Mammary epithelial cell (primary cell): ENCODE measurements at regions of chr3 and their contacts with region 1.

Region 1: GRCh38 chr3:27712136-27713077 is 9.7 kb downstream of the EOMES start:
- DNase-seq: peak; percentile 60
- H3K4me3 ChIP-seq: peak overlapping the region; percentile 48 to 56 (median 50)
- H3K27ac ChIP-seq: no peak overlapping the region
- H3K4me1 ChIP-seq: peaks cover 19% of the 10 kb centered on the region
- H3K27me3 ChIP-seq: no peaks in the 10 kb centered on the region
- CTCF ChIP-seq: peak; percentile 63 to 90

Region 2: DNA sequence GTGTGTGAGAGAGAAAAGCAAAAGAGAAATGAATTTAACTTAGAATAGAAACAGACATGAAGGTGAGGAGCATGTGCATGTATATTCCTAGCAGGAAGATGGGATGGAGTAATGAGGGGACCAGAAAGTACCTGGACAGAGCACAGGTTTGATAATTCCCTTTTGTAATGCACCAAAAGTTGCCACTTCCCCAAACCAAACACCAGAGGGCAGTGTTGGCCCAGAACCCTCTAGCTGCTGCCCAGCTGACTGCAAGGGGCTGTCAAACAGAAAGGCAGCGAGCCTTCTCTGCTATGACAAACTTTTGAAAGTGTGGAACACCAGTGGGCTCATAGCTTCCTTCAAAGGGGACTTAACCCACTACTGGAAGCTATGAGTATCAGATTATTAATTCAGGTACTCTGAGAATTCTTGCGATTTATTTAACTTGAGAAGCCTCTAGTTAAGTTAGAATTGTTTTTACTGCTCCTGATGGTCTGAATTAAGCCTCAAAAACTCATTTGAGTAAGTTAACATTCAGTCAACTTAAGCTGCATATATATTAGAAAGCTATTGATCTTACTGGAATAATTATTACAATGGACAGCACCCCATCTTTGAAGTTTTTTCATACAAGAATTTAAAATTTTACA is 578.1 kb before region 1 on chr3:
- CTCF ChIA-PET with region 1: no interaction called
- dilution Hi-C with region 1: no loop called
- in situ Hi-C with region 1: no loop called
- intact Hi-C with region 1: loop called (anchors 1 kb)
- DNase-seq: peak; percentile 46
- H3K4me3 ChIP-seq: no peak overlapping the region
- H3K27ac ChIP-seq: no peak overlapping the region
- H3K4me1 ChIP-seq: no peaks in the 10 kb centered on the region
- H3K27me3 ChIP-seq: no peaks in the 10 kb centered on the region
- CTCF ChIP-seq: peak; percentile 86 to 95

Region 3: GRCh38 chr3:27888562-27888961 is 176.2 kb after region 1 on chr3:
- CTCF ChIA-PET with region 1: interaction called, 4 read pairs
- dilution Hi-C with region 1: no loop called
- in situ Hi-C with region 1: no loop called
- intact Hi-C with region 1: loop called (anchors 1 kb)
- DNase-seq: peak; percentile 2
- H3K4me3 ChIP-seq: no peak overlapping the region
- H3K27ac ChIP-seq: no peak overlapping the region
- H3K4me1 ChIP-seq: no peaks in the 10 kb centered on the region
- H3K27me3 ChIP-seq: peaks cover 5% of the 10 kb centered on the region
- CTCF ChIP-seq: peak in 1 of 2 donors; percentile 31

Region 4: GRCh38 chr3:27943106-27943505 is 230.7 kb after region 1 on chr3:
- CTCF ChIA-PET with region 1: no interaction called
- dilution Hi-C with region 1: no loop called
- in situ Hi-C with region 1: no loop called
- intact Hi-C with region 1: no loop called
- DNase-seq: peak; percentile 20
- H3K4me3 ChIP-seq: no peak overlapping the region
- H3K27ac ChIP-seq: no peak overlapping the region
- H3K4me1 ChIP-seq: no peaks in the 10 kb centered on the region
- H3K27me3 ChIP-seq: no peaks in the 10 kb centered on the region
- CTCF ChIP-seq: peak; percentile 34 to 58

Region 5: DNA sequence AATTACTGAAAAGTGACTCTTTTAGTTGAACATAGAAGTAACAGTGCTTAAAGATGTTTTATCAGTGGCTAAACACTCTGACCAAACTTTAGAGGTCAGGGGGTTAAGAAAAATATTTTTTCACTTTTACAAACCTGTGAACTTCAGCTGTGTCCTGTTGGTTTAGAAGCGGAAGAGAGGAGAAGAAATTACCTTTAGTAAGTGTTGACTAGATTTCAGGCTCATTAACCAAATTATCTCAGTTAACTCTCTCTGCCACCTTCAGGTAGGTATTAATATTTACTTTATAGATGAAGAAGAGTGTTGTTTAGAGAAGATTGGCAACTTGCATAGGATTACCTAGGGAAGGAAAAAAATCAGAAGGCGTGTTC is 377.1 kb after region 1 on chr3:
- CTCF ChIA-PET with region 1: no interaction called
- dilution Hi-C with region 1: no loop called
- in situ Hi-C with region 1: loop called in 1 of 2 experiments (anchors 25 kb)
- intact Hi-C with region 1: loop called (anchors 2 kb)
- DNase-seq: peak; percentile 1
- H3K4me3 ChIP-seq: no peak overlapping the region
- H3K27ac ChIP-seq: no peak overlapping the region
- H3K4me1 ChIP-seq: no peaks in the 10 kb centered on the region
- H3K27me3 ChIP-seq: no peaks in the 10 kb centered on the region
- CTCF ChIP-seq: peak in 1 of 2 donors; percentile 45

Region 6: DNA sequence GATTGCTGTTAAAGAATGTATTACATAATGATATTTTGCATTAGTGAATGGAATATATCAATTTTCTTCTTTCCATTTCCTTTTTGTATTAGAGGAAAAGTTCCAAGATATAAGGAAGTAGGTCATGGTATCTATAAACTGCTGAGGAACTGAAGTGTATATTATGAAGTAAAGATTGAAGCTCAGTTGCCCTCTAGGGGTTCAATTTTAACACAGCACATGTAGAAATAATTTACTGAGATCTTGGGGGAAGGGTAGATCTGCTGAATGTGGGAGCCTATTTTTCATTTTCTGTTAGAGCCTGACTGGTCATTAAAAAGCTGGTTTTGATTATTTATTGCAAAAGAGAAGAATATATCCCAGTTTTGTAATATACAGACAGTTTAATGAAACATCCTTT is 574.2 kb after region 1 on chr3:
- CTCF ChIA-PET with region 1: interaction called, 5 read pairs
- dilution Hi-C with region 1: no loop called
- in situ Hi-C with region 1: no loop called
- intact Hi-C with region 1: loop called (anchors 1 kb)
- DNase-seq: peak; percentile 27
- H3K4me3 ChIP-seq: no peak overlapping the region
- H3K27ac ChIP-seq: no peak overlapping the region
- H3K4me1 ChIP-seq: no peaks in the 10 kb centered on the region
- H3K27me3 ChIP-seq: no peaks in the 10 kb centered on the region
- CTCF ChIP-seq: peak; percentile 50 to 61

Region 7: DNA sequence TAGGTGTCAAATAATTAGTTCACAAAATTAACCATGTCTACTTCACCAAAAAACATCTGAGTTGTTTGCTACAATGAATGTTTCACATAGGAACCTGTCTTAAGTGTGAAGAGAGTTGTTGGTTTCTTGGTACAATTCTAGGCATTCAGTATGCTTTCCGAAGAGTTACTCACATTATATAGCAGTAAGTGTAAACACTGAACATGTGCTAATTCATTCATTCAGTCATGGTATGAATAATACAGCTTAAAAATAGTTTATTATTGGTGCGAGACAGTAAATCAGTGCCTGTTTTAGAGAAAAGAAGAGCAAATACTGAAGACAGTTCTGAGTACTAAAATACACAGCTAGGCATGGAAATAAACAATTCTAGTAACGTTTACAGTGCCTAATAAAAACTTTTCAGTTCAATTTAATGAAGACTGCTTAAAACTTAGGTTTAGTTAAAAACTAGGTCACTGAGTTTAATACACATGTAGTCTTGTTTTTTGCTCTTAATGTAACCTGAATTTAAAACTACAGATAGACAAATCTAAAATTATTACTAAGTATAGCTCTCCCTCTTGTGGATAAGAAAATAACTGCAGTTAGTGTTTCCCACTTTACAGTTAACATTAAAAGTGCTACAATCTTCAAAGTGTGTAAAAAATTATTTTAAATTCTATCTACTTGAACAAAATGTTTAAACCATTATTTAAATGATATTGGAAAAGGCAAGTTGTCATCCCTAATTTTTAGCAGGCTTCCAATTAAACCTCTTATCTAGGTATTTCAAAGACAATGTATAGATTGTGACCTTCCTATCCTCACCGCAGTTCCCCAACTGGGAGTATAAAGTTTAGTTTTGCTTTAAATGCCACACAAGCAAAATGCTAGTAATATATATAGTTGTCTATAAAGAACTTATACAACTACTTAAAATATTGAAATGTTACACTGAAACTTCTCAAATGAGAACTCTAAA is 616.1 kb after region 1 on chr3:
- CTCF ChIA-PET with region 1: no interaction called
- dilution Hi-C with region 1: no loop called
- in situ Hi-C with region 1: loop called (anchors 25 kb)
- intact Hi-C with region 1: loop called (anchors 1 kb)
- DNase-seq: no peak
- H3K4me3 ChIP-seq: no peak overlapping the region
- H3K27ac ChIP-seq: no peak overlapping the region
- H3K4me1 ChIP-seq: no peaks in the 10 kb centered on the region
- H3K27me3 ChIP-seq: no peaks in the 10 kb centered on the region
- CTCF ChIP-seq: peak; percentile 44 to 54